Adrenal gland (tissue), 19 donors: ENCODE measurements at regions of chr1 and their contacts with region 1.

Region 1: GRCh38 chr1:161486806-161487741 is 18.2 kb upstream of the FCGR2A start:
- DNase-seq: peak; percentile 38 to 81 (median 54)
- H3K4me3 ChIP-seq: no peak overlapping the region
- H3K27ac ChIP-seq: no peak overlapping the region
- H3K4me1 ChIP-seq: no peaks in the 10 kb centered on the region
- H3K27me3 ChIP-seq: peaks cover 25% of the 10 kb centered on the region
- CTCF ChIP-seq: peak; percentile 53 to 77 (median 68)
- POLR2A ChIP-seq: no peak

Region 2: DNA sequence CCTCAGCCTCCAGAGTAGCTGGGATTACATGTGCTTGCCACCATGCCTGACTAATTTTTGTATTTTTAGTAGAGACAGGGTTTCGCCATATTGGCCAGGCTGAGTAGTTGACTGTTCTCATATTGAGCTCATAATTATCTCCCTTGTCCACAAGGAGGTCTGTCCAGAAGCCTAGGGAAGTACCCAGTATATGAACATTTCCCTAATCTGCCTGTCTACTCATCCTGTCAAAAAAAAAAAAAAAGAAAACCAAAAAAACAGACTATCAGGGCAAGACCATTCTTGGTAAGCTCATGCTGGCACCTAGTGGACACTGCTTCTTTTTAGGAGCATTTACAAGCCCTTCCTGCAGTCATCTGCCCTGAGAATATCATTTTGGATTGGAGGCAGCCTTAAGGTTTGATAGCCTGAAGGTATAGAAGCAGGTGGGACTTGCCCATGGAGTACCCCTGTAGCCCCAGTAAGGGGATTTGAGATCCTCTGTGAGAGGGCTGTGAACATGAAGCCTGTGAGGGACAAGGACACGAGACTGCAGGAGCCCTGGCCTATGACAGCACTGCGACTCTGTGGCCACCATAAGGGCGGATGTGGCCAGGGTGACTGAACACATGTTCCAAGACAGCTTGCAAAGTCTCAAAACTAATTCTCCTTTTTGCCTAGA is 251.7 kb after region 1 on chr1:
- intact Hi-C with region 1: loop called (anchors 10 kb)
- DNase-seq: peak in 6 of 7 donors; percentile 36 to 71 (median 46)
- H3K4me3 ChIP-seq: no peak overlapping the region
- H3K27ac ChIP-seq: peak overlapping the region in 2 of 5 donors; percentile 47 to 65
- H3K4me1 ChIP-seq: peaks cover 0 to 11% of the 10 kb centered on the region in 2 donors
- H3K27me3 ChIP-seq: peaks cover 4% of the 10 kb centered on the region
- CTCF ChIP-seq: peak in 5 of 6 experiments; percentile 30 to 70 (median 45)
- POLR2A ChIP-seq: peak in 1 of 2 donors; percentile 16

Region 3: GRCh38 chr1:161749509-161750407 is 262.7 kb after region 1 on chr1 and contains the start of gene DUSP12:
- intact Hi-C with region 1: loop called in 1 of 2 experiments (anchors 10 kb)
- DNase-seq: peak; percentile 90 to 95 (median 94)
- H3K4me3 ChIP-seq: peak within 1 kb of the TSS; percentile 84 to 98 (median 86)
- H3K27ac ChIP-seq: peak within 1 kb of the TSS; percentile 74 to 94 (median 83)
- H3K4me1 ChIP-seq: peaks cover 7 to 12% of the 10 kb centered on the region in 2 donors
- H3K27me3 ChIP-seq: no peaks in the 10 kb centered on the region
- CTCF ChIP-seq: peak in 3 of 6 experiments; percentile 5 to 8 (median 7)
- POLR2A ChIP-seq: peak; percentile 10 to 70
- total RNA-seq, gene DUSP12: 13.0 to 48.1 (median 16.8) TPM